BJ (cell line): ENCODE measurements at regions of chr15 and their contacts with region 1.

Region 1: DNA sequence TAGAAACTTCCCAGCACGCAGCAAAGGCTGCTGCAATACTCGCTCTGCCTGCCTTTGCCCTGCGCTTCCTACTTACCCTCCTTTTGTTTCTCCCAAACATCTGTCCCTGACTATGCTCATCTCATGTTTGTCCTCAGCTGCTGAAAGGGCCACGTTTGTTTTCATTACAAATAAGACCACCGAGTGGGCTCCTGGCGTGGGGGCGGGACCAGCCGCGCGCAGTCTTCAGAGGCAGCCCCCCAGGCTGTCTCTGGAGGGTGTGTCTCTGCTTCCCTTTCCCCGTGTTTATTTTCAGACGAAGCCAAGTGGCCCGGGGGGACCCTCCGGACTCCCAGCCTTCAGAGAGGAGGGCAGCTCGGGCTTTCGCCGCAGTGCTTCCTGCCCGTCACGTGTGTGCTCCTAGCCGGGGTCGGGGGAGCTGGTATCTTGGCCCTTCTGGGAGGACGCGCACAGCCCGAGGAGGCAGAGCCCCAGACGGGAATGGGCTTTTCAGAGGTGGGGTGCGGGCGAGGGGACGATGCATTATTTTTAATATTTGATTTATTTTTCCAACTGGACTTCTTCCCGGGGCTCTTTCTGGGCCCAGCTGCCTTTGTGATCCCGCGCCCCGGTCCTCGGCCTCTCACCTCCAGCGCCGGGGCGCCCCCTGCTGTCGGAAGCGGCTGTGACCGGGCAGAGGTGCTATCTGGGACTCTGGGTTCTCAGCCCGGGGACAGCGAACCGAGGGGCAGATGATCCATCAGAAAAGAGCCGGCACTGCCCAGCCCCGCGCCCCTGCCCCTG is 70.0 kb upstream of the CGNL1 start:
- DNase-seq: no peak
- H3K4me3 ChIP-seq: peak overlapping the region; percentile 48
- H3K27me3 ChIP-seq: no peaks in the 10 kb centered on the region
- CTCF ChIP-seq: peak; percentile 97

Region 2: GRCh38 chr15:57146506-57147201 is 159.7 kb before region 1 on chr15:
- CTCF ChIA-PET with region 1: interaction called, 99 read pairs
- POLR2A ChIA-PET with region 1: interaction called, 3 read pairs
- DNase-seq: no peak
- H3K4me3 ChIP-seq: no peak overlapping the region
- H3K27me3 ChIP-seq: no peaks in the 10 kb centered on the region
- CTCF ChIP-seq: peak; percentile 69

Region 3: GRCh38 chr15:57218826-57219576 is 87.4 kb before region 1 on chr15:
- CTCF ChIA-PET with region 1: interaction called, 21 read pairs
- POLR2A ChIA-PET with region 1: no interaction called
- DNase-seq: no peak
- H3K4me3 ChIP-seq: peak overlapping the region; percentile 42
- H3K27me3 ChIP-seq: no peaks in the 10 kb centered on the region
- CTCF ChIP-seq: no peak

Region 4: DNA sequence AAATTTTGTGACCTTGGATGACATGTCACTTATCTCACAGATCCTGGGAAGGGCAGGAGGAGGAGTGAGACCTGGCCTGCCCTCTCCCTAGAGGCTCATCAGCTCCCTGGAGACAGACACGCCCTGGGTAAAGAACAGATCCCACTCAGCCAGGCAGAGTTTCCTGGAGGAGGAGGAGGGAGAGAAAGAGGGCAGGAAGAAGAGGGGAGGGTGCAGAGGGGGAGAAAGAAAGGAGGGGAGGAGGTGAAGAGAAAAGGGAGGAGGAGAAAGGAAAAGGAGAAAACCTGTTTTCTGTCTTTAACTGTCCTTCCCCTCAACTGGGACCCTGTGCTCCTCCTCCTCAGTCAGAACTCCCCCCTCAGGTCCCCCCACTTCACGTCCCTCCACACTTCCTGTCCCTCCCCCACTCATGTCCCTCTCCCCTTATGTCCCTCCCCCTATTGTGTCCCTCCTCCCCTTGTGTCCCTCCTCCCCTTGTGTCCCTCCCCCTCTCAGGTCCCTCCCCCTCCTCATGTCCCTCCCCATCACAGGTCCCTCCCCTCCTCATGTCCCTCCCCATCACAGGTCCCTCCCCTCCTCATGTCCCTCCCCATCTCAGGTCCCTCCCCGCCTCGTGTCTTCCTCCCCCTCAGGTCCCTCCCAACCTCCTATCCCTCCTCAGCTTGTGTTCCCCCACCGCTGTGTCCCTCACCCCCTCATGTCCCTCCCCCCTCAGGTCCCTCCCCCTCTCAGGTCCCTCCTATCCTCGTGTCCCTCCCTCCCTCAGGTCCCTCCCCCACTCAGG is 17.6 kb after region 1 on chr15:
- CTCF ChIA-PET with region 1: interaction called, 13 read pairs
- POLR2A ChIA-PET with region 1: interaction called, 7 read pairs
- DNase-seq: peak; percentile 34
- H3K4me3 ChIP-seq: no peak overlapping the region
- H3K27me3 ChIP-seq: no peaks in the 10 kb centered on the region
- CTCF ChIP-seq: no peak

Region 5: DNA sequence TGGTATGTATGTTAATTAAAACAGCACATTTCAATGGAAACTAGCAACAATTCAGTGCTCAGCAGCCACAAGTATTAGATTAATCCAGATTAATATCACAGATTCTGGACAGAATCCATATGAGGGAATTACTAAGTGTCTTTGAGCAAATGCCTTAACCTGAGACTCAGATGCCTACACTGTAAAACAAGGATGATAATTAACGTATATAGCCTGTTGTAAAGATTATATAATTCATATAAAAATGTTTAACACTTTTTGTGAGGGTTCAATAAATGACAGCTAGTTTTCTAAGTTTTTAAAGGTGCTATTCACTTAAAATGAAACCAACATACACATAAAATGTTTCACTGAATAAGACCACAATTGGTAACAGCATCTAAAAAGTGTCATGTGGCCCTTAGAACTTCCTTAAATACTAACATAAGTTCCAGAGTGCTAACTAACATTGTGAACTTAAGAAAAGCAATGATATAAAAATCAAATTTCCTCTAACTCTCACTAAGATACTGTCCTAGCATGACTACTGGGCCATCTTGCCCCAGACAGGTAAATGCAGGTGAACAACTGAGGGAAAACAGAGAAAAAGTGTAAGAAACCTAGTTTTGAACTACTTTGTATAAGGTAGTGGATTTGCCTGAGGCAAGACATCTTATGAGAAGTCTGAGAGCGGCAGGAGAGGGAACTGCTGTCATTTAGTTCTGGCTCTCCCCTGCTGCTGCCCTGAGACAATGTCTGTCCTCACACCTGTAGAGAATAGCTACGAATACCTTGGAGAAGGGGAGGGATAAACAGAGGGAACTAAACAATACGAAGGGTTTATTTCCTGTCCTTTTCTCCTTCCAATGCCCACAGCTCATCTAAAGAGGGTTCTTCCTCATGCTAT is 1291.8 kb after region 1 on chr15:
- CTCF ChIA-PET with region 1: no interaction called
- POLR2A ChIA-PET with region 1: no interaction called
- DNase-seq: no peak
- H3K4me3 ChIP-seq: no peak overlapping the region
- H3K27me3 ChIP-seq: no peaks in the 10 kb centered on the region
- CTCF ChIP-seq: no peak